CD8-positive, alpha-beta T cell (primary cell): ENCODE measurements at regions of chr11 and their contacts with region 1.

Region 1: GRCh38 chr11:64317957-64318693 is at the start of gene PRDX5:
- DNase-seq: peak; percentile 90 to 99 (median 93)
- ATAC-seq: peak; percentile 75
- H3K4me3 ChIP-seq: peak within 1 kb of the TSS; percentile 66 to 69
- H3K4me3 Mint-ChIP-seq: peak within 1 kb of the TSS; percentile 89
- H3K27ac ChIP-seq: peak within 1 kb of the TSS; percentile 97 to 100
- H3K27ac Mint-ChIP-seq: peak within 1 kb of the TSS; percentile 99
- H3K4me1 ChIP-seq: peaks cover 8% of the 10 kb centered on the region
- H3K4me1 Mint-ChIP-seq: peaks cover 32% of the 10 kb centered on the region
- H3K27me3 ChIP-seq: no peaks in the 10 kb centered on the region
- H3K27me3 Mint-ChIP-seq: no peaks in the 10 kb centered on the region
- CTCF ChIP-seq: no peak
- total RNA-seq, gene PRDX5: 39.9 to 41.0 TPM

Region 2: DNA sequence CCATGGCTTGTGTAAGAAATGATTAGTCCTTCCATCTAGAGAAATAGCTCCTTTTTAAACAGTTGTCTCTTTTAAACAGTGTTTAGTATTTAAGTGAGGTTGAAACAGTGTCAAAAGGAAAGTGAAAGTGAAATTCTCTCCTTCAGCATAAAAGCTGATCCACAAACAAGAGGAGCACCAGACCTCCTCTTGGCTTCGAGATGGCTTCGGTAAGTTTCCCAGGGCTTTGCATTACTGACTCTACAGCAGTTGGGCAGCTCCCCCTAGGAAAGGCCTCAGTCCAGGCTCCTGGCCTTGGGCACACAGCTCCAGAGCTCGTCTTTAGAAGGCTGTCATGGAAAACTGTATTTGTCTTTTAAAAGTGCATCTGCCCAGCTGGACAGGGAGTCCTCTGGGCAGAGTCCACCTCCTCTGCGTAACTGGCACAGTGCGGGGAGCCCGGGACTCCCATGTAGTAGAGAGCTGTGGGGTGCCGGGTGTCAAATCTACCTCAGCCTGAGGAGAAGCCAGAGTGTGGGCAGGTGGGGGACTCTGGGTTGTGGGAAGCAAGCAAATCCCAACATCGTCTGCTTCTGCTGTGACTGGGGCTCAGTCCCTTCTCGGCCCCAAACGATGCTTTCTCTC is 781.3 kb before region 1 on chr11 and contains the start of gene PLAAT4:
- CTCF ChIA-PET with region 1: no interaction called
- POLR2A ChIA-PET with region 1: no interaction called
- intact Hi-C with region 1: no loop called
- DNase-seq: peak in 5 of 9 experiments; percentile 21 to 81 (median 65)
- ATAC-seq: peak; percentile 53
- H3K4me3 ChIP-seq: peak within 1 kb of the TSS; percentile 71 to 85
- H3K4me3 Mint-ChIP-seq: peak within 1 kb of the TSS; percentile 92
- H3K27ac ChIP-seq: peak within 1 kb of the TSS; percentile 83 to 84
- H3K27ac Mint-ChIP-seq: peak within 1 kb of the TSS; percentile 97
- H3K4me1 ChIP-seq: peaks cover 84% of the 10 kb centered on the region
- H3K4me1 Mint-ChIP-seq: peaks cover 85% of the 10 kb centered on the region
- H3K27me3 ChIP-seq: no peaks in the 10 kb centered on the region
- H3K27me3 Mint-ChIP-seq: no peaks in the 10 kb centered on the region
- CTCF ChIP-seq: no peak
- total RNA-seq, gene PLAAT4: 81.9 to 84.0 TPM

Region 3: DNA sequence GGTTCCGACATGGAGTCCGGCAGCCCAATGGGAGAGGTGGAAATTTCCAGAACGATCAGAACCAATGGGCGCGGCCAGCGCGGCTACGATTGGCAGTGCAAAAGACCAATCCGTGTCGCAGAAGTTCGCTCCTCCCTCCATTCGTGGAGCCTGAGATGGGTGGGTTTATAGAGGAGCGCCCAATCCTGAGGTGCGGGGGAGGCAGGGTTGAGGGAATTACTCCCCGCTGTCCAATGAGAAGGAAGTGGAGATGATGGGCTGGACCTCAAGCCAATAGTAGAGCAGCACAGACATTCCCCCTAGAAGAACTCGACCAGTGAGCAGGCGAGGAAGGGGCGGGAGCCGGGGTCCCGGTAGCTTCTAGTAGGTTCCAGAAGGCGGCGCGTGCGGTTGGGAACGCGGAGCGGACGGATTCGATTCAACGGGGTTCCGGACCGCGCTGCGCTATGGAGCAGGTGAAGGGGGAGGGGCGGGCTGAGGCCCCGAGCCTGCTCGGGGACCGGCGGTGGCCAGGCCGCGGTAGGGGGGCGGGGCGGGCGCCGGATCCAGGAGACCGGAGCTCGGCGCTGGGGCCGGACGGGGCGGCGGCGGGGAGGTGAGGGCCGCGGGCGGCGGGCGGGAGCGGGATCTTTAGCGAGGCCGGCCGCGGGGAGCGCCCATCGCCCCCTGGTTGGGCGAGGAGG is 132.2 kb before region 1 on chr11 and contains the start of gene STIP1:
- CTCF ChIA-PET with region 1: no interaction called
- POLR2A ChIA-PET with region 1: interaction called, 13 read pairs
- intact Hi-C with region 1: loop called in 1 of 2 experiments (anchors 1 kb)
- DNase-seq: peak; percentile 96 to 100 (median 98)
- ATAC-seq: peak; percentile 87
- H3K4me3 ChIP-seq: peak within 1 kb of the TSS; percentile 79 to 88
- H3K4me3 Mint-ChIP-seq: peak within 1 kb of the TSS; percentile 96
- H3K27ac ChIP-seq: peak within 1 kb of the TSS; percentile 57 to 85
- H3K27ac Mint-ChIP-seq: peak within 1 kb of the TSS; percentile 97
- H3K4me1 ChIP-seq: peaks cover 39% of the 10 kb centered on the region
- H3K4me1 Mint-ChIP-seq: peaks cover 43% of the 10 kb centered on the region
- H3K27me3 ChIP-seq: no peaks in the 10 kb centered on the region
- H3K27me3 Mint-ChIP-seq: no peaks in the 10 kb centered on the region
- CTCF ChIP-seq: peak; percentile 36
- total RNA-seq, gene STIP1: 37.0 to 37.7 TPM

Region 4: GRCh38 chr11:64240394-64241174 is 77.5 kb before region 1 on chr11 and contains the start of gene FKBP2:
- CTCF ChIA-PET with region 1: interaction called, 5 read pairs
- POLR2A ChIA-PET with region 1: interaction called, 10 read pairs
- intact Hi-C with region 1: loop called (anchors 1 kb)
- DNase-seq: peak; percentile 94 to 100 (median 97)
- ATAC-seq: peak; percentile 63
- H3K4me3 ChIP-seq: peak within 1 kb of the TSS; percentile 80 to 97
- H3K4me3 Mint-ChIP-seq: peak within 1 kb of the TSS; percentile 90
- H3K27ac ChIP-seq: peak within 1 kb of the TSS; percentile 94 to 99
- H3K27ac Mint-ChIP-seq: peak within 1 kb of the TSS; percentile 100
- H3K4me1 ChIP-seq: peaks cover 29% of the 10 kb centered on the region
- H3K4me1 Mint-ChIP-seq: peaks cover 34% of the 10 kb centered on the region
- H3K27me3 ChIP-seq: no peaks in the 10 kb centered on the region
- H3K27me3 Mint-ChIP-seq: no peaks in the 10 kb centered on the region
- CTCF ChIP-seq: no peak
- total RNA-seq, gene FKBP2: 19.4 TPM

Region 5: DNA sequence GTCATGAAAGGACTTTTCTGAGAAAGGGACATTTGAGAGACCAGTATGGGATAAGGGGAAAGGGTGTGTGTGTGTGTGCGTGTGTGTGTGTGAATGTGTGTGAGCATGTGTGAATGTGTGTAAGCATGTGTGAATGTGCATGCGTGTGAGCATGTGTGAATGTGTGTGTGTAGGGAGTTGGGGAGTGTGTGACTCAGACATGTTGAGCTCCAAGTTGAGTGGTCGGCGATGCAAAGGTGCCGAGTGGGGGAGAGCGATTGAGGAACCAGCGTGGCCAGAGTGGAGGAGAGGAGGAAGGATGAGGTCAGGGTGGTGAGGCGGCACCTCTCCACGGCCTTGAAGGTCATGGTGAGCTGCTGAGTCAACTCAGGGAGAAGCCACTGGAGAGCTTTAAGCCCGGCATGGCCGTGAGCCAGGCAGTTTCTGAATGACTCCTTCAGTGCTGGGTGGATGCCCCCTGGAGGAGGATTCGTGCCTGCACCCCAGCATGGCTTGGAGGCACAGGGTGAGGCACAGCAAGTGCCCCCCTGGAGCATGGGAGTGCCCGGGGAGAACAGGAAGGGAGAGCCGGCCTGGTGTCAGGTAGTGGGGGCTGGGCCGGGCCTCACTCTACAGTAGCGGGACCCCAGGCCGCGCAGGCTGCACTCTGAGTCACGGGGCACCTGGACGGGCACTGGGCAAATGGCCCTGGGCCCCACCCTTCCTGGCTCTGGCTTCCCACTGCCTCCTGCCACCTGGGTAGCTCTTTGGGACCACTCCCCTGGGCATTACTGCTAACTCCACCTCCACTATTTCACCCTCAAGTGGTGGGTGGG is 13.6 kb after region 1 on chr11:
- CTCF ChIA-PET with region 1: interaction called, 14 read pairs
- POLR2A ChIA-PET with region 1: interaction called, 17 read pairs
- intact Hi-C with region 1: loop called (anchors 1 kb)
- DNase-seq: peak; percentile 53 to 87 (median 74)
- ATAC-seq: peak; percentile 89
- H3K4me3 ChIP-seq: no peak overlapping the region
- H3K4me3 Mint-ChIP-seq: peak overlapping the region; percentile 27
- H3K27ac ChIP-seq: peak overlapping the region in 1 of 2 experiments; percentile 61
- H3K27ac Mint-ChIP-seq: peak overlapping the region; percentile 52
- H3K4me1 ChIP-seq: peaks cover 6% of the 10 kb centered on the region
- H3K4me1 Mint-ChIP-seq: peaks cover 12% of the 10 kb centered on the region
- H3K27me3 ChIP-seq: no peaks in the 10 kb centered on the region
- H3K27me3 Mint-ChIP-seq: no peaks in the 10 kb centered on the region
- CTCF ChIP-seq: peak; percentile 51

Region 6: GRCh38 chr11:64652586-64653387 is 334.7 kb after region 1 on chr11:
- CTCF ChIA-PET with region 1: no interaction called
- POLR2A ChIA-PET with region 1: no interaction called
- intact Hi-C with region 1: loop called (anchors 1 to 5 kb)
- DNase-seq: peak; percentile 43 to 79 (median 71)
- ATAC-seq: peak; percentile 93
- H3K4me3 ChIP-seq: no peak overlapping the region
- H3K4me3 Mint-ChIP-seq: no peak overlapping the region
- H3K27ac ChIP-seq: no peak overlapping the region
- H3K27ac Mint-ChIP-seq: no peak overlapping the region
- H3K4me1 ChIP-seq: no peaks in the 10 kb centered on the region
- H3K4me1 Mint-ChIP-seq: no peaks in the 10 kb centered on the region
- H3K27me3 ChIP-seq: no peaks in the 10 kb centered on the region
- H3K27me3 Mint-ChIP-seq: peaks cover 9% of the 10 kb centered on the region
- CTCF ChIP-seq: peak; percentile 59

Region 7: GRCh38 chr11:64878494-64879243 is 560.5 kb after region 1 on chr11 and contains the start of gene EHD1:
- CTCF ChIA-PET with region 1: no interaction called
- POLR2A ChIA-PET with region 1: no interaction called
- intact Hi-C with region 1: loop called in 1 of 2 experiments (anchors 5 kb)
- DNase-seq: peak; percentile 99 to 100 (median 100)
- ATAC-seq: peak; percentile 82
- H3K4me3 ChIP-seq: peak within 1 kb of the TSS; percentile 87 to 100
- H3K4me3 Mint-ChIP-seq: peak within 1 kb of the TSS; percentile 95
- H3K27ac ChIP-seq: peak within 1 kb of the TSS; percentile 91 to 96
- H3K27ac Mint-ChIP-seq: peak within 1 kb of the TSS; percentile 97
- H3K4me1 ChIP-seq: peaks cover 57% of the 10 kb centered on the region
- H3K4me1 Mint-ChIP-seq: peaks cover 63% of the 10 kb centered on the region
- H3K27me3 ChIP-seq: no peaks in the 10 kb centered on the region
- H3K27me3 Mint-ChIP-seq: no peaks in the 10 kb centered on the region
- CTCF ChIP-seq: peak; percentile 29
- total RNA-seq, gene EHD1: 187 to 212 TPM